HepG2 (cell line): ENCODE measurements at regions of chr6 and their contacts with region 1.

Region 1: DNA sequence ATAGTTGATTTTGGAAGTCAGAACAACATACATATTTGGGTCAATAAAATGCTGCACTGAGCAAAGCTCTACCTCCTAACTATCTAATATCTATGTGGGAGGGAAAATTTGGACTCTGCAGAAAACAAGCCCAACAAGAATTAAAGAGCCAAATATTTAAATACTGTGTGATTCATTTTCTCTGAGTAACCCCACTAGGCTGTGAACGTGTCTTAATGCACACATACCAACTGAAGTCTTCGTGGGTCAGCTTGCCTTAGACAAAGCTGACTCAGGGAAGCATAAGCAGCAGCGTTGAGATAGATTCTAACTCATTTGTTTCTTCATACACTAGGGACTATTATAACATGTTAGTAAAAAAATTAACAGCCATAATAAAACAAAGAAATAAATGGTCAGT is 114.3 kb downstream of the GJA1 start:
- DNase-seq: no peak
- ATAC-seq: no peak
- H3K4me3 ChIP-seq: no peak overlapping the region
- H3K27ac ChIP-seq: no peak overlapping the region
- H3K4me1 ChIP-seq: no peaks in the 10 kb centered on the region
- H3K27me3 ChIP-seq: no peaks in the 10 kb centered on the region; a peak in 1 of 5 replicates
- CTCF ChIP-seq: no peak
- EP300 ChIP-seq: no peak
- POLR2A ChIP-seq: no peak
- RAD21 ChIP-seq: no peak

Region 2: GRCh38 chr6:121619987-121620740 is 70.4 kb after region 1 on chr6:
- CTCF ChIA-PET with region 1: no interaction called
- POLR2A ChIA-PET with region 1: no interaction called
- in situ Hi-C with region 1: no loop called
- intact Hi-C with region 1: loop called (anchors 2 kb)
- DNase-seq: no peak
- ATAC-seq: no peak
- H3K4me3 ChIP-seq: no peak overlapping the region
- H3K27ac ChIP-seq: no peak overlapping the region
- H3K4me1 ChIP-seq: no peaks in the 10 kb centered on the region
- H3K27me3 ChIP-seq: no peaks in the 10 kb centered on the region
- CTCF ChIP-seq: no peak
- EP300 ChIP-seq: no peak
- POLR2A ChIP-seq: no peak
- RAD21 ChIP-seq: no peak